ENCODE measurements at regions of chr20 and their contacts with region 1.

Region 1: DNA sequence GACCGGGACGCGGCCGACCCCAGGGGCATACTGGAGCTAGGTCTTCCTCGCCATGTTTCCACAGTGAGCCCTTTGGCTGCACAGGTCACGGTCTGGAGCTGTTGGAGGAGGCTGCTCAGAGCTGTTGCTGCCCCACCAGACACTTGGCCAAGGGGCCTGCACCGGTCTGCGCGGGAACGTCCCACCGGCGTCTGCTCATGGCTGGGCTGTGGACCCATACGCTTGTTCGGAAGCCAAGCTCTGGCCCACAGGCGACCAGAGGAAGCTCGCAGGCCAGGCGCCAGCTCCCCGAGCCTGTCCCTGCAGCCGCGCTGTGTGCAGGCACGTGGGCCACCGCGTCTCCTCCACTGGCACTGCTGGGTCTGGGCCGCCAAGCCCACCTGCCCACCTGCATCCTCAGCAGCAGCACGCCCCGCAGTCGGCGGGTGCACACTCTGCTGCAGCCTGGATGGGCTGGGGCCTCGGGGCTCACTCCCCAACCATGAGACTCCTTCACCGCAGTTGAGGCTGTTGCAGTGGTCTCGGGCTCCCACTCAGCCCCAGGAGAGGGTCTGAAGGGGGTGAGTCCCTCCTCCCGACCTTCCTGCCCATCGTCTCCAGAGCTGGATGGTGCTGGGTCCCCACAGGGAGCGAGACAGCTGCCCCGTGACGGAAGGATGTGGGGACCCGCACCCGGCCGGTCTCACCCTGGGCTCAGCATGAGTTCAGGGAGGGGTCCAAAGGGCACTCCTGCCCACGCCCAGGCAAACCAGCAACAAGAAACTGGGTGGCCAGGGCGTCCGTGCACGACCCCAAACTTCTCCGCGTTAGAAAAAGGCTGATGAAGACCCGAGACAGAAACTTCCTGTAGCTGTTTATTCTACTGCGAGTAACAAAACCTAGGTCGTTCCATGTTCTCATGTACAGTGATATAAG is 15.5 kb upstream of the TCFL5 start:
- DNase-seq: peak in 1 of 2 experiments; percentile 10
- H3K4me3 ChIP-seq: no peak overlapping the region
- H3K27ac ChIP-seq: no peak overlapping the region
- H3K4me1 ChIP-seq: peaks cover 9% of the 10 kb centered on the region
- H3K27me3 ChIP-seq: no peaks in the 10 kb centered on the region
- CTCF ChIP-seq: no peak

Region 2: DNA sequence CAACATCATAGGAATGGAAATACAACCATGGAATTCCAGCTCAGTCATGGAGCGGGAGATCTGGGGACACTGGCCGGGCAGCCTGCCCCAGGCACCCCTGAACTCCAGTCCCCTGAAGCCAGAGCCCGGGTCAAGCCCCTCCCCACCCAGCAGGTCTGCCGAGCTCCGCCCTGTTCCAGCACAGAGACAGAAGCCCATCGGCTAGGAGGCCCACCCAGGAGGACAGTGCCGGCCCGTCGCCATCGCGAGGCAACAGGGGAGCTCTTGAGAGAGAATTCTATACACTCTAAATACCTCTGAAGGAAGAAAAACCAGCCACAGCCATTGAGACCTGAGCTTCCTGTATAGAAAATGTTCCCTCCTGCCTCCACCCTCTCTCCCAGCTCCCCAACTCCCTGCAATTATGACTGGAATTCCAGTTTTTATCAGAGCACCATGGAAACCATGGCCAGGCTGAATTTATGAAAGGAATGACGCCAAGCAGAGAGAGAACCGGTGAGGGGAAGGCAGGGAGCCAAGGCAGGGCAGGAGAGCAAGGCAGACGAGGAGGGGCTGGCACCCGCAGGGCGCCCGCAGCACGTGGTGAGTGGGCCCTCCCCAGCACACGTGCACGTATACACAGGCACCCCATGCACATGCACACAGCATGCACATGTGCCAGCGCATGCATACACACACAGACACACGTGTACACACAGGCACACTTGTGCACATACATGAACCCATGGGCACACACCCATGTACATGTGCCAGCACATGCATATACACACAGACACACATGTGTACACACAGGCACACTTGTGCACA is 108.5 kb before region 1 on chr20:
- CTCF ChIA-PET with region 1: no interaction called
- POLR2A ChIA-PET with region 1: no interaction called
- intact Hi-C with region 1: no loop called
- DNase-seq: peak; percentile 72 to 83
- H3K4me3 ChIP-seq: no peak overlapping the region
- H3K27ac ChIP-seq: no peak overlapping the region
- H3K4me1 ChIP-seq: peaks cover 59% of the 10 kb centered on the region
- H3K27me3 ChIP-seq: 0 out of 2 replicates have a peak, but pooled peaks cover 5% of the 10 kb centered on the region
- CTCF ChIP-seq: no peak

Region 3: DNA sequence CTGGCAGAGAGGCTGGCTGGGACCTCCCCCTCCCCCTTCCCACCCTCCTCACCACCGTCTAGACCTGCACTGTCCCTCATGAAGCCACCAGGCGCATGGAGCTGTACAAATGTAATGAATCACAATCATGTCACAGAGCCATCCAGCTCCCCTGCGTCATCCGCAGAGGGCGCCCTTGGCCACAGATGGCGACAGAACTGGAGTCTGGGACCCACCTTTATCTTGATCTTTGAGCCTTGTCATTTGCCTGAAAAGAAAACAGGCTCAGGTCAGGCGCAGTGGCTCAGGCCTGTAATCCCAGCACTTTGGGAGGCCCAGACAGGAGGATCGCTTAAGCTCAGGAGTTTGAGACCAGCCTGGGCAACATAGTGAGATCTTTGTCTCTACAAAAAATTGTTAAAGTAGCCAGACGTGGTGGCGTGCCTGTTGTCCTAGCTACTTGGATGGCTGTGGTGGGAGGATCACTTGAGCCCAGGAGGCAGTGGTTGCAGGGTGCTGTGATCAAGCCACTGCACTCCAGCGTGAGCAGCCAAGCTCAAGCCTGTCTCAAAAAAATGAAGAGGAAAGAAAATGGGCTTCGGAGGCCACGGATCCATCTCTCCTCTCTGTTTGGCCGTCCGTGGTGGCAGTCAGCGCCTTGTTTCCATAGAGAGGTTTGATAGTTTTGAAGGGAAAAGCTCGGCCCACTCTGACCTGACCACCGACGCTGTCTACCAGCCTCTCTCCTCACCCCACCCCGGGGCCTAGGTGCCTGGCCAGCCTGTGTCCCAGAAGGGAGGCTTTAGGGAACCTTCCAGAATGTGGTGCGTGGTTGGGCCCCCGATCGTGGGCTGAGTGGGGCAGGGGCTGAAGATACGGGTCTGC is 54.1 kb before region 1 on chr20:
- CTCF ChIA-PET with region 1: interaction called, 10 read pairs
- POLR2A ChIA-PET with region 1: no interaction called
- intact Hi-C with region 1: loop called (anchors 2 kb)
- DNase-seq: peak; percentile 80 to 87
- H3K4me3 ChIP-seq: no peak overlapping the region
- H3K27ac ChIP-seq: no peak overlapping the region
- H3K4me1 ChIP-seq: peaks cover 36% of the 10 kb centered on the region
- H3K27me3 ChIP-seq: no peaks in the 10 kb centered on the region
- CTCF ChIP-seq: peak; percentile 79

Region 4: GRCh38 chr20:63612276-63612928 is 735.2 kb after region 1 on chr20:
- CTCF ChIA-PET with region 1: no interaction called
- POLR2A ChIA-PET with region 1: no interaction called
- intact Hi-C with region 1: no loop called
- DNase-seq: no peak
- H3K4me3 ChIP-seq: no peak overlapping the region
- H3K27ac ChIP-seq: no peak overlapping the region
- H3K4me1 ChIP-seq: no peaks in the 10 kb centered on the region
- H3K27me3 ChIP-seq: no peaks in the 10 kb centered on the region
- CTCF ChIP-seq: no peak